Natural killer cell (primary cell): ENCODE measurements at regions of chr19 and their contacts with region 1.

Region 1: DNA sequence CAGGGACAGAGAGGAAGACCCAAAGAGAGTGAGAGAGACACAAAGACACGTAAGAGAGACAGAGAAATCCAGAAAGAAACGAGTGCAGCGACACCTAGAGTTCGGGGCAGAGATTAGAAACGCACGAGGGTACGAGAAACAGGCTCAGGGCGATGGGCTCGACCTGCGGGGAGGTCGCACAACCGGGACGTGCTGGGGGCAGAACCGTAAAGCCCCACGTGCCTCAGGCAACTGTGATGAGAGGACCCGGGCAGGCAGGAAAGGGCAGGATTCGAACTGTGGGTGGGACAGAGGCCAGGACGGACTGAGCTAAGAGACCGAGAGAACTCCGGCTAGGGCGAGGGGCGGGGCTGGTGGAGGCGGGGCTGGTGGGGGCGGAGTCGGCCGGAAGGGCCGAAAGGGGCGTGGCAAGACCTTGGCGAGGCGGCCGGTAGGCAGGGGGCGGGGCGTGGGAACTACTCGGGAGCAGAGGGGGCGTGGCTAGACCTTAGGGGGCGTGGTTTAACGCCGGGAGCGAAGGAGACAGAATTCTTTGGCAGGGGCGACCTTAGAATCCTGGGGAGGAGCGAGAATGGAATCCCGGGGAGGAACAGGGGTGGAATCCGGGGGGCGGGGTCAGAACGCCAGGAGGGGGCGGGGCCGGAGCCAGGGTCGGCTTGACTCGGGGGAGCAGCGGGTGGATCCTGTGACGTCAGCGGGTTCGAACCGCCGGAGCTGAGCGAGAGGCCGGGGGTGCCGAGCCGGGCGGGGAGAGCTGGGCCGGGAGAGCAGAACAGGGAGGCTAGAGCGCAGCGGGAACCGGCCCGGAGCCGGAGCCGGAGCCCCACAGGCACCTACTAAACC is at the start of gene NECTIN2:
- DNase-seq: peak; percentile 74 to 86
- ATAC-seq: peak; percentile 73 to 86 (median 75)
- H3K4me3 ChIP-seq: peak within 1 kb of the TSS; percentile 42
- H3K4me3 Mint-ChIP-seq: peak within 1 kb of the TSS; percentile 88
- H3K27ac ChIP-seq: no peak within 1 kb of the TSS
- H3K27ac Mint-ChIP-seq: peak within 1 kb of the TSS; percentile 35 to 61
- H3K4me1 ChIP-seq: peaks cover 39% of the 10 kb centered on the region
- H3K4me1 Mint-ChIP-seq: peaks cover 17 to 33% of the 10 kb centered on the region in 2 donors
- H3K27me3 ChIP-seq: peaks cover 13% of the 10 kb centered on the region
- H3K27me3 Mint-ChIP-seq: peaks cover 0 to 20% of the 10 kb centered on the region in 2 donors
- CTCF ChIP-seq: no peak
- total RNA-seq, gene NECTIN2: 1.6 to 10.3 (median 2.7) TPM

Region 2: DNA sequence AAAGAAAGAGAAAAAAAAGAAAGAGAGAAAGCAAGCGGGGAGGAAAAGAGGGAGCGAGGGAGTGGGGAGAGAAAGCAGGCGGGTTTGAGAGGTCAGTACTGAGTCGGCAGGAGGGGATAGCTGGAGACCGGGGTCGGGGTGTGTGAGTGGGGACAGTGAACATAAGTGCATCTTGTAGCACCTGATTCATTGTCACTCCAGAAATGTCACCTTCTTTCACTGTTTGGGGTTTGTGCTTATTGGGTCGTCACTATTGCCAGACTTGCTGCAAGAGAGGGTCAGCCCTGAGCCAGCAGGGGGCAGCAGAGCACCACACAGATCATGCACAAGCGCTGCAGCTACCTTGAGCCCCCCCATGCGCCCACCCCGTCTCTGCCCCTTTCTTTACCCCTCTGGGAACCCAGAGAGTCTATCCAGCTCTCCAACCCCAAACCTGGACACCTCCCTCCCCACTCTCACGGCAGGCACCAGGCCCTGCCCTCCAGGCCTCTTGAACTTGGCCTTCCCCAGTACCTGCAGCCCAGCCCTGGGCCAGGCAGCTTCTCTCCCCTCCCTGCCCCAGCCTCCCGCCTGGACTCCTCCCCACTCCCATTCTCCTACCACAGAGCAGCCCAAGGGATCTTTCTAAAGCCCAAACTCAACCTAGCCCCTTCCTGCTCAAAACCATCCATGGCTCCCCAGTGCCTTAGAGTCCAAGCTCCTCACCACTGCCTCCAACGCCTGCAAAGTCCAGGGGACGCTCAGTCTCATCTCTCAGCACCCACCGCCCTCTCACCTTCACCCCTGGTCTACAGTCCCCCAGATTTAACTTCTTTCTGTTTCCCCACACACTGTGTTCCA is 156.6 kb before region 1 on chr19:
- intact Hi-C with region 1: loop called (anchors 10 kb)
- DNase-seq: peak; percentile 69 to 88
- ATAC-seq: peak; percentile 49 to 72 (median 71)
- H3K4me3 ChIP-seq: no peak overlapping the region
- H3K4me3 Mint-ChIP-seq: no peak overlapping the region
- H3K27ac ChIP-seq: no peak overlapping the region
- H3K27ac Mint-ChIP-seq: peak overlapping the region in 1 of 2 donors; percentile 51
- H3K4me1 ChIP-seq: peaks cover 32% of the 10 kb centered on the region
- H3K4me1 Mint-ChIP-seq: peaks cover 0 to 28% of the 10 kb centered on the region in 2 donors
- H3K27me3 ChIP-seq: no peaks in the 10 kb centered on the region
- H3K27me3 Mint-ChIP-seq: peaks cover 3 to 6% of the 10 kb centered on the region in 2 donors
- CTCF ChIP-seq: peak; percentile 86

Region 3: GRCh38 chr19:44723952-44724319 is 121.9 kb before region 1 on chr19:
- intact Hi-C with region 1: loop called (anchors 5 kb)
- DNase-seq: peak; percentile 80 to 90
- ATAC-seq: peak; percentile 91 to 94 (median 92)
- H3K4me3 ChIP-seq: no peak overlapping the region
- H3K4me3 Mint-ChIP-seq: no peak overlapping the region
- H3K27ac ChIP-seq: no peak overlapping the region
- H3K27ac Mint-ChIP-seq: peak overlapping the region in 1 of 2 donors; percentile 6
- H3K4me1 ChIP-seq: peaks cover 48% of the 10 kb centered on the region
- H3K4me1 Mint-ChIP-seq: peaks cover 9 to 22% of the 10 kb centered on the region in 2 donors
- H3K27me3 ChIP-seq: peaks cover 2% of the 10 kb centered on the region
- H3K27me3 Mint-ChIP-seq: peaks cover 0 to 7% of the 10 kb centered on the region in 2 donors
- CTCF ChIP-seq: peak; percentile 98

Region 4: GRCh38 chr19:44782729-44783128 is 63.1 kb before region 1 on chr19:
- intact Hi-C with region 1: loop called (anchors 1 kb)
- DNase-seq: no peak
- ATAC-seq: no peak
- H3K4me3 ChIP-seq: no peak overlapping the region
- H3K4me3 Mint-ChIP-seq: no peak overlapping the region
- H3K27ac ChIP-seq: no peak overlapping the region
- H3K27ac Mint-ChIP-seq: no peak overlapping the region
- H3K4me1 ChIP-seq: peaks cover 6% of the 10 kb centered on the region
- H3K4me1 Mint-ChIP-seq: peaks cover 0 to 6% of the 10 kb centered on the region in 2 donors
- H3K27me3 ChIP-seq: no peaks in the 10 kb centered on the region
- H3K27me3 Mint-ChIP-seq: peaks cover 6 to 10% of the 10 kb centered on the region in 2 donors
- CTCF ChIP-seq: no peak

Region 5: DNA sequence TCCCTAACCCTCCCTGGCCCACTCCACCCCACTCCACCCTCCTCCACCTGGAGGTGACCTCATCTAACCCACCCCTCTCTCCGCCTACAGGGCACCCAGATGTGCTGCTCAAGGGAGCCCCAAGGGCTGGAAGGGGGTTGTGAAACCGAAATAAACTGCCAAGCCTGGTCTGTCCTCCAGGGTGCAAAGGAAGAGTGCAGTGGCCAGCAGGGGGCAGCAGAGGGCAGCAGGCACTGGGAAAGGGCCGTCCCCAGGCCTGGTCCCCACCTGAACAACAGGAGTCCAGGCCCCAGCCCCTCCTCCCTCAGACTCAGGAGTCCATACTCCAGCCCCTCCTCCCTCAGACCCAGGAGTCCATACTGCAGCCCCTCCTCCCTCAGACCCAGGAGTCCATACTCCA is 45.4 kb before region 1 on chr19:
- intact Hi-C with region 1: loop called (anchors 1 kb)
- DNase-seq: peak; percentile 83 to 87
- ATAC-seq: peak; percentile 93 to 99 (median 99)
- H3K4me3 ChIP-seq: no peak overlapping the region
- H3K4me3 Mint-ChIP-seq: no peak overlapping the region
- H3K27ac ChIP-seq: no peak overlapping the region
- H3K27ac Mint-ChIP-seq: no peak overlapping the region
- H3K4me1 ChIP-seq: peaks cover 5% of the 10 kb centered on the region
- H3K4me1 Mint-ChIP-seq: no peaks in the 10 kb centered on the region
- H3K27me3 ChIP-seq: no peaks in the 10 kb centered on the region
- H3K27me3 Mint-ChIP-seq: peaks cover 0 to 2% of the 10 kb centered on the region in 2 donors
- CTCF ChIP-seq: peak; percentile 73

Region 6: GRCh38 chr19:44856421-44857083 is 10.7 kb after region 1 on chr19:
- intact Hi-C with region 1: no loop called
- DNase-seq: no peak
- ATAC-seq: no peak
- H3K4me3 ChIP-seq: no peak overlapping the region
- H3K4me3 Mint-ChIP-seq: no peak overlapping the region
- H3K27ac ChIP-seq: no peak overlapping the region
- H3K27ac Mint-ChIP-seq: no peak overlapping the region
- H3K4me1 ChIP-seq: peaks cover 10% of the 10 kb centered on the region
- H3K4me1 Mint-ChIP-seq: peaks cover 0 to 5% of the 10 kb centered on the region in 2 donors
- H3K27me3 ChIP-seq: no peaks in the 10 kb centered on the region
- H3K27me3 Mint-ChIP-seq: peaks cover 0 to 2% of the 10 kb centered on the region in 2 donors
- CTCF ChIP-seq: no peak